ENCODE measurements at regions of chr19 and their contacts with region 1.

Region 1: GRCh38 chr19:18160971-18161635 is 8.1 kb downstream of the PIK3R2 start:
- DNase-seq: peak; percentile 66
- H3K4me3 ChIP-seq: peak overlapping the region; percentile 35
- H3K27ac ChIP-seq: peak overlapping the region; percentile 65
- H3K4me1 ChIP-seq: no peaks in the 10 kb centered on the region
- H3K27me3 ChIP-seq: no peaks in the 10 kb centered on the region
- CTCF ChIP-seq: peak; percentile 31; the same call in 1 of the 2 replicates

Region 2: DNA sequence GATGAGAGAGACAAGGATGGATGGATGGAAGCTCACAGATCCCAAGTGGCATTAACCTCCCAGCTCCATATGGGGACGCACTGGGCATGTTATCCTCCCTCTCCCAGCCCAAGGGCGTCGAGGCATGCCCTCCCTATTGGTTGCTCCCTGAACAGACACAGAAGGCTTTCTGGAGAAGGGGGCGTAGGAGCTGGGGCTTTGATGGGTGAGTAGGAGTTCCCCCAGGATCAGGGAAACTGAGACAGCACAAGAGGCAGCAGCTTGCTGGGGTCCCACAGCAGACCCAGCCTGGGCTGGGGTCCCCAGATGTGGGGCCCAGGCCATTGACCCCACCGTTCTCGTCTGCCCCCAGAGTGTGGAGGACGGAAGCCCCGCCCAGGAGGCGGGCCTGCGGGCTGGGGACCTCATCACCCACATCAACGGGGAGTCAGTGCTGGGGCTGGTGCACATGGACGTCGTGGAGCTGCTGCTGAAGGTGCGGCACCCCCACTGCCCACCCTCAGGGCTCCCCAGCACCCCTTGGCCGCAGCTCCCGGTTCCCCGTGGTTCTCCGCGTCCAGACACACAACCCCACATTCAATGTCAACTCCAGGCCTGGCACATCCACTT is 15.6 kb before region 1 on chr19:
- CTCF ChIA-PET with region 1: interaction called, 11 read pairs
- POLR2A ChIA-PET with region 1: no interaction called
- intact Hi-C with region 1: no loop called
- DNase-seq: no peak
- H3K4me3 ChIP-seq: no peak overlapping the region
- H3K27ac ChIP-seq: no peak overlapping the region
- H3K4me1 ChIP-seq: no peaks in the 10 kb centered on the region
- H3K27me3 ChIP-seq: no peaks in the 10 kb centered on the region
- CTCF ChIP-seq: no peak